GM12878 (cell line): ENCODE measurements at regions of chr3 and their contacts with region 1.

Region 1: DNA sequence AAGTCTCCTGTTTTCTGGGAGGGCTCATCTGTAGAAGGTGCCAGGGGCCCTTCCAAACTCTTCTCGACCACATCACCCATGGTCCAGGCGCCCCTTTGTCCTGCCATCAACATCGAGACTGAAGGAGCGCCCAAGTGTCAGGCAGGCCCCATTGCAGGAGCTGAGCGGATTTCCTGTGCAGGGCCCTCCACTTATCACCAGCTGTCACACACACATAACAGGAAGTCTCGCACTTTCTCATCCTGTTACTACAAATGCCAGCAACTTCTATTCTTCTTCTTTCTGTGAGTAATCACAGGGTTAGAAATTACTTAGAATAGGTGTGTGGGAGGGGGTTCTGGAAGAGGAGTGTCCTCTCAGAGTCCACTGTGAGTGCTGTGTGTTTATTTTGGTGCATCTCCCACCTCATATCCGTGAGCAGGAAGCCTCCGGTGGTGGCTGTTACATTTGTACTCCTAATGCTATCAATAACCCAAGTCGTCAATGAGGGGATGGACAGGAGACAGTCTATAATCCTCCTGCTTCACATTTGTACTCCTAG is at the start of gene KLHL6:
- DNase-seq: peak; percentile 64
- ATAC-seq: peak; percentile 79
- H3K4me3 ChIP-seq: peak within 1 kb of the TSS; percentile 75
- H3K27ac ChIP-seq: peak within 1 kb of the TSS; percentile 56
- H3K4me1 ChIP-seq: peaks cover 22% of the 10 kb centered on the region
- H3K27me3 ChIP-seq: peaks cover 0 to 3% of the 10 kb centered on the region in 2 experiments; a peak in 1 of 4 replicates
- CTCF ChIP-seq: no peak
- EP300 ChIP-seq: peak; percentile 63 to 72; a peak in 2 of 4 replicates
- POLR2A ChIP-seq: peak; percentile 85
- RAD21 ChIP-seq: peak; percentile 29
- polyA plus RNA-seq, gene KLHL6: 4.0 to 4.2 TPM

Region 2: GRCh38 chr3:182980204-182981037 is 575.2 kb before region 1 on chr3 and contains the start of gene DCUN1D1:
- CTCF ChIA-PET with region 1: no interaction called
- POLR2A ChIA-PET with region 1: no interaction called
- RAD21 ChIA-PET with region 1: no interaction called
- SMC1A ChIA-PET with region 1: no interaction called
- in situ Hi-C with region 1: no loop called
- intact Hi-C with region 1: loop called (anchors 10 kb)
- DNase-seq: peak; percentile 19
- ATAC-seq: peak; percentile 91
- H3K4me3 ChIP-seq: peak within 1 kb of the TSS; percentile 85
- H3K27ac ChIP-seq: peak within 1 kb of the TSS; percentile 53
- H3K4me1 ChIP-seq: peaks cover 9% of the 10 kb centered on the region
- H3K27me3 ChIP-seq: no peaks in the 10 kb centered on the region
- CTCF ChIP-seq: no peak
- EP300 ChIP-seq: no peak
- POLR2A ChIP-seq: peak; percentile 84
- RAD21 ChIP-seq: no peak
- polyA plus RNA-seq, gene DCUN1D1: 19.8 to 47.4 TPM

Region 3: DNA sequence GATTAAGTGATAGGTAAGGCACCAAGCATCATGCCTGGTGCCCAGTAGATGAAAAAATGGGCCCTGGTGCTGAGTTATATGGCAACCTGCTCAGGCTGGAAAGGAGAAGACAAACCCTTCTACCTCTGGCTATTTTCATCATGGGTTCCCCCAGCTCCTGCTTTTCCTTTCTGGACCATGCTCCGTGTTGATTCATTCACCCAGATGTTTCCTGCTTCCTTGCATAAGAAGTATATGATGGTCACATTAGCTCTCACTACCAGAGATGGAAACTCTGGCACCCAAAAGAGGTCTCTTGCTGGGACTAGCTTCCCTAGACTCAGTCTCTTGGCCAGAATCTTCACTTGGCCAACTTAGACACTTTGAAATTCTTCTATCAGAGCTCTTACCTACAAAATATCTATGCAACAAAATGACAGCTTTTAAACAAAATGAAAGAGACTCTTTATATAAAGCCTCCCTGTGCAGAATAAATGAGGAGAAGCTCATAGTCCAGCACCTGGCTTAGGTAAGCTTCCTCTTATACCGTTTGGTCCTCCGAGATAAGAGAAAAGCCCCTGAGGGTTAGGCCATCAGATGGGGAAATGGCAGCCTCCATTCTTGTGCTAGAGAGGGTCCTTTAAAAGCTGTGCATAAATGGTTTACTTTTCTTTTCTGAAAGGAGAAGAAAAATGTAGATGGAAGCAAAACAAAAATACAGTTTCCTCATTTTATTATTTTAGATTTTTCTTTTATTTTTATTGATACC is 80.4 kb before region 1 on chr3:
- CTCF ChIA-PET with region 1: interaction called, 42 read pairs
- POLR2A ChIA-PET with region 1: interaction called, 3 read pairs
- RAD21 ChIA-PET with region 1: interaction called, 27 read pairs
- SMC1A ChIA-PET with region 1: interaction called, 42 read pairs
- in situ Hi-C with region 1: loop called (anchors 5 kb)
- intact Hi-C with region 1: loop called (anchors 2 kb)
- DNase-seq: no peak
- ATAC-seq: no peak
- H3K4me3 ChIP-seq: no peak overlapping the region
- H3K27ac ChIP-seq: no peak overlapping the region
- H3K4me1 ChIP-seq: no peaks in the 10 kb centered on the region
- H3K27me3 ChIP-seq: no peaks in the 10 kb centered on the region; a peak in 1 of 4 replicates
- CTCF ChIP-seq: no peak
- EP300 ChIP-seq: no peak
- POLR2A ChIP-seq: no peak
- RAD21 ChIP-seq: no peak

Region 4: DNA sequence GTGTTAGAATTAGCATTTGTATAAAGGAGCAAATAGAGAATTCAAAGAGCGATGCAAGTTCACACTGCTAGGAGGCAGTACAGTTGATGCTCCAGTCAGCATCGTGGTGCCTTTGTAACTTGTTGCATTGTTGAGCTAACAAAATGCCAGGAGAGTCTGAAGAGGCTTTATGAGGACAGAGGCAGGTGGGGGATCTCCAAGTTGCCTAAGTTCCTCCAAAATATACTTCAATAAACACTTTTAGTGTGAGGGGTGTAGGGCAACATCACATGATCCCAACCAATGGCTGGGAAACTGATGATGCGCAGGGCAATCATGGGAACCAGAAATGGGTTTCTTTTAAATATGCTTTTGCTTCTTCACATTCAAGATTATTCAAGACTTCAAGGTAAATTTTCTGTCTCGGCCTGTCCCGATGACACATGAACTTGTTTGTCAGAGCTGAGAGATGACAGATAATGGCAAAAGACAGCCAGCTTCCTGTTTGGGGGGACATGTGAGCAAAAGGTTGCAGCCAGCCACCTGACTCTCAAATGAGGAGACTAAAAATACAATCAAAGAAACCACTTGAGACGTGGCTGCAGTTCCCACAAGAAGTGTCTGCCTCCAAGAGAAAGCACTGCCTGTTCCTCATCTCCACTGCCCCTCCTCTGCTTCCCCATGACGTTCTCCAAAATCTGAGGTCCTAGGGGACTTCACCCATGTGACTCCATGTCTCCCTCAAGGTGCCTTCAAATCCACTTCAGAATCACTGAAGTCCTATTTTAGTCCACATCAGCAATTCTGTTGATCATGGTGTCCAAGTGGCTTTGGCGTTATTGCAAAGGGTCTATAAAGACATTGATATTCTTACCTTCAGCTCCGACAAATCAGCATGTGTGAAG is 39.4 kb before region 1 on chr3:
- CTCF ChIA-PET with region 1: interaction called, 34 read pairs
- POLR2A ChIA-PET with region 1: interaction called, 73 read pairs
- RAD21 ChIA-PET with region 1: interaction called, 27 read pairs
- SMC1A ChIA-PET with region 1: interaction called, 60 read pairs
- in situ Hi-C with region 1: no loop called
- intact Hi-C with region 1: loop called (anchors 2 kb)
- DNase-seq: peak; percentile 77
- ATAC-seq: peak; percentile 61
- H3K4me3 ChIP-seq: no peak overlapping the region
- H3K27ac ChIP-seq: peak overlapping the region; percentile 7; the same call in 1 of the 2 replicates
- H3K4me1 ChIP-seq: peaks cover 43% of the 10 kb centered on the region
- H3K27me3 ChIP-seq: no peaks in the 10 kb centered on the region
- CTCF ChIP-seq: peak; percentile 15 to 21 (median 20); a peak in 3 of 6 replicates
- EP300 ChIP-seq: peak in 1 of 2 experiments; percentile 91; a peak in 2 of 4 replicates
- POLR2A ChIP-seq: peak; percentile 33; the same call in 1 of the 2 replicates
- RAD21 ChIP-seq: peak; percentile 32

Region 5: GRCh38 chr3:183537295-183537730 is 18.3 kb before region 1 on chr3:
- CTCF ChIA-PET with region 1: interaction called, 37 read pairs
- POLR2A ChIA-PET with region 1: interaction called, 172 read pairs
- RAD21 ChIA-PET with region 1: interaction called, 154 read pairs
- SMC1A ChIA-PET with region 1: interaction called, 155 read pairs
- in situ Hi-C with region 1: no loop called
- intact Hi-C with region 1: loop called (anchors 1 kb)
- DNase-seq: no peak
- ATAC-seq: no peak
- H3K4me3 ChIP-seq: no peak overlapping the region
- H3K27ac ChIP-seq: no peak overlapping the region
- H3K4me1 ChIP-seq: peaks cover 75% of the 10 kb centered on the region
- H3K27me3 ChIP-seq: no peaks in the 10 kb centered on the region
- CTCF ChIP-seq: no peak
- EP300 ChIP-seq: no peak
- POLR2A ChIP-seq: no peak
- RAD21 ChIP-seq: no peak

Region 6: GRCh38 chr3:183635431-183636220 is 80.0 kb after region 1 on chr3 and contains the start of gene KLHL24:
- CTCF ChIA-PET with region 1: interaction called, 4 read pairs
- POLR2A ChIA-PET with region 1: interaction called, 26 read pairs
- RAD21 ChIA-PET with region 1: interaction called, 11 read pairs
- SMC1A ChIA-PET with region 1: interaction called, 20 read pairs
- in situ Hi-C with region 1: no loop called
- intact Hi-C with region 1: loop called (anchors 1 kb)
- DNase-seq: peak; percentile 60
- ATAC-seq: peak; percentile 91
- H3K4me3 ChIP-seq: peak within 1 kb of the TSS; percentile 80
- H3K27ac ChIP-seq: peak within 1 kb of the TSS; percentile 77
- H3K4me1 ChIP-seq: peaks cover 19% of the 10 kb centered on the region; the same call in 1 of the 2 replicates
- H3K27me3 ChIP-seq: no peaks in the 10 kb centered on the region; a peak in 1 of 4 replicates
- CTCF ChIP-seq: 0 out of 6 replicates have a peak, but pooled peaks of 1 of the 3 experiments have one; percentile 5
- EP300 ChIP-seq: no peak
- POLR2A ChIP-seq: peak; percentile 90
- RAD21 ChIP-seq: no peak
- polyA plus RNA-seq, gene KLHL24: 0.91 to 1.6 TPM

Region 7: GRCh38 chr3:183766745-183767606 is 211.4 kb after region 1 on chr3:
- CTCF ChIA-PET with region 1: interaction called, 14 read pairs
- POLR2A ChIA-PET with region 1: no interaction called
- RAD21 ChIA-PET with region 1: interaction called, 10 read pairs
- SMC1A ChIA-PET with region 1: interaction called, 5 read pairs
- in situ Hi-C with region 1: no loop called
- intact Hi-C with region 1: loop called (anchors 2 kb)
- DNase-seq: no peak
- ATAC-seq: peak; percentile 99
- H3K4me3 ChIP-seq: no peak overlapping the region
- H3K27ac ChIP-seq: no peak overlapping the region
- H3K4me1 ChIP-seq: no peaks in the 10 kb centered on the region
- H3K27me3 ChIP-seq: no peaks in the 10 kb centered on the region
- CTCF ChIP-seq: peak; percentile 67 to 82 (median 79)
- EP300 ChIP-seq: no peak
- POLR2A ChIP-seq: no peak
- RAD21 ChIP-seq: peak; percentile 89